ENCODE measurements at regions of chr2 and their contacts with region 1.

Region 1: GRCh38 chr2:231674587-231675338 is 33.6 kb upstream of the PTMA start:
- DNase-seq: peak; percentile 52
- H3K4me3 ChIP-seq: no peak overlapping the region
- H3K27ac ChIP-seq: no peak overlapping the region
- H3K4me1 ChIP-seq: peaks cover 9% of the 10 kb centered on the region
- H3K27me3 ChIP-seq: no peaks in the 10 kb centered on the region
- CTCF ChIP-seq: peak; percentile 76 to 89
- POLR2A ChIP-seq: no peak

Region 2: GRCh38 chr2:231583982-231584381 is 90.8 kb before region 1 on chr2:
- CTCF ChIA-PET with region 1: no interaction called
- POLR2A ChIA-PET with region 1: no interaction called
- dilution Hi-C with region 1: no loop called
- intact Hi-C with region 1: no loop called
- DNase-seq: no peak
- H3K4me3 ChIP-seq: no peak overlapping the region
- H3K27ac ChIP-seq: no peak overlapping the region
- H3K4me1 ChIP-seq: no peaks in the 10 kb centered on the region
- H3K27me3 ChIP-seq: peaks cover 2 to 3% of the 10 kb centered on the region in 2 experiments
- CTCF ChIP-seq: no peak
- POLR2A ChIP-seq: no peak

Region 3: DNA sequence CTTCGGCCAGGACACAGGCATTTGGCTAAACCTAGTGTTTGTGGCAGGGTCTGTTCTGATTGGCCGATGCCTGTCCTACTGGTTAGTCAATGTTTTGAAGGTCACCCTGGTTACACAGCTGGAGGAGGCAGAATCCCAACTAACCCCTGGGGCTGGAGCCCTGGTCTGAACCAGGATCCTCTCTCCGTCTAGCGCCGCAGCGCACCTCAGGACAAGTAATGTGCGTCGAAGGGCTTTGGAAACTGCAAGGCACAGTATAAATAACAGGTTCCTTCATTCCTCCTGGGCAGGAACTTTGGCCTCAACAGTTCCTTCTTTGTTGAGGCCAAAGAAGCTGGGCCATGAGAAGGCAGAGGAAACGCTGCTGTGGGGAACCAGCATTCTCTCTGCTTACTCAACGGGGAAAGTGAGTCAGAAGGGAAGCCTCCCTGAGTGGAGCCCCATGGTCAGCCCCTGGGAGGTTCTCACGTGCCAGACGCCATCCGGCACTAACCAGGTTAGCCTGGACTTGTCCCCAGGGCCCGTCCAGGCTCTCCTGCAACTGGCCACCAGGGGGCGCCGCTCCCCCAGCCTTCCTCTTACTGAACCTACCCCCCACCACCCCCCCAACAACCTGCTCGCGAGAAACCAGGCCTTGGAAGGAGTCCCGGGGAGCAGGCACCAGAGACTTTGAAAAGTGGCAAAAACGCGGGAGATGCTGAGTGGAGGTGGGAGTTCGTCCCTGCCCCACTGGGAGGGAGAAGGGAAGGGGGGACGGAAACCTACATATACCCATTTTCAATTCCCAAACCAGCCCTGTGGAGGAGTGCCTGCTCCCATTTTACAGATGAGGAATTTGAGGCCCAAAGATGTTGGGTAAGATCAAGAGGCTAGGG is 62.3 kb before region 1 on chr2:
- CTCF ChIA-PET with region 1: interaction called, 268 read pairs
- POLR2A ChIA-PET with region 1: interaction called, 6 read pairs
- dilution Hi-C with region 1: no loop called
- intact Hi-C with region 1: loop called (anchors 1 kb)
- DNase-seq: peak; percentile 95
- H3K4me3 ChIP-seq: no peak overlapping the region
- H3K27ac ChIP-seq: peak overlapping the region; percentile 89
- H3K4me1 ChIP-seq: peaks cover 28% of the 10 kb centered on the region
- H3K27me3 ChIP-seq: no peaks in the 10 kb centered on the region
- CTCF ChIP-seq: peak; percentile 74 to 96
- POLR2A ChIP-seq: no peak

Region 4: GRCh38 chr2:231655897-231656296 is 18.9 kb before region 1 on chr2:
- CTCF ChIA-PET with region 1: interaction called, 93 read pairs
- POLR2A ChIA-PET with region 1: no interaction called
- dilution Hi-C with region 1: no loop called
- intact Hi-C with region 1: no loop called
- DNase-seq: no peak
- H3K4me3 ChIP-seq: no peak overlapping the region
- H3K27ac ChIP-seq: no peak overlapping the region
- H3K4me1 ChIP-seq: no peaks in the 10 kb centered on the region
- H3K27me3 ChIP-seq: no peaks in the 10 kb centered on the region
- CTCF ChIP-seq: no peak
- POLR2A ChIP-seq: no peak

Region 5: DNA sequence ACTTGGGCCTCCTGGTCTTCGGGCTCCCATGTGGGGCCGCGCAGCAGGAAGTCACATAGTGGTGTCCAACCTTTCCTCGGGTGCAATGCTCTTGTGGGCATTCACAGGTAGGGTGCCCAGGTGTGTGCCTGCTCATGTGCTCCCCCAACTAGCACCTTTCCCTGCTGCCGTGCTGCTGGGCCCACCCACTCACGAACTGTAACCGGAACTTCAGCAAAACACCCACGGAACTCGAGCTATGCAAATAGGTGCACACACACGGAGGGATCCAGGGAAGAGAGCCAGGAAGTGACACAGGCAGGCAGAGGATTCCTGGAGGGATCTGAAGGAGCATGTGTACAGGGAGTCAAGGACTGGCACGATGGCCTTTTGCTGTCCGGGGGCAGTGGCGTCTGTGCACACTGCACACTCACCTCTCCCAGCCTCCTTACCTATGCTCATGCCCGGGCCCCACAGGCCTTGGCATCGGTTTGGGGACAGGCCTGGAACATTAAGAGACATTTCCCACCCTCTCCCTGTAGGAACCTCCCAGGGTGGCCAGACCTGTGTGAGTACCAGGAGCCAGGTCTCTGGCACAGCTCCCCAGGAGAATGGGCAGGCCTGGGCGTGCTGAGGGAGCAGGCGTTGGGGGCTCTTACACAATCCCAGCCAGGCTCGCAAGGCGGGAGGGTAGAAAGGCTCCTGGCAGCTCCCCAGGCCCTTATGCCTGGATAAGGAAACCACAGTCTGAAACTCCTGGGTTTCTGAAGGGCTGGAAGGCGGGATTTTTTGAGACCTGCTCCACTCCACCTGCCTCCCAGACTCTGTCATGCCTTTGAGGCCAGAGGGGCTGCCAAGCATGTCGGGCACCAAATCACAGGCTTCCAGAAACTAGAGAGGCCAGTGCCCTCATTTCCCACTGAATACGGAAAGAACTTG is 27.0 kb after region 1 on chr2:
- CTCF ChIA-PET with region 1: interaction called, 583 read pairs
- POLR2A ChIA-PET with region 1: interaction called, 3 read pairs
- dilution Hi-C with region 1: no loop called
- intact Hi-C with region 1: no loop called
- DNase-seq: no peak
- H3K4me3 ChIP-seq: no peak overlapping the region
- H3K27ac ChIP-seq: no peak overlapping the region
- H3K4me1 ChIP-seq: peaks cover 4% of the 10 kb centered on the region
- H3K27me3 ChIP-seq: no peaks in the 10 kb centered on the region
- CTCF ChIP-seq: no peak
- POLR2A ChIP-seq: no peak

Region 6: DNA sequence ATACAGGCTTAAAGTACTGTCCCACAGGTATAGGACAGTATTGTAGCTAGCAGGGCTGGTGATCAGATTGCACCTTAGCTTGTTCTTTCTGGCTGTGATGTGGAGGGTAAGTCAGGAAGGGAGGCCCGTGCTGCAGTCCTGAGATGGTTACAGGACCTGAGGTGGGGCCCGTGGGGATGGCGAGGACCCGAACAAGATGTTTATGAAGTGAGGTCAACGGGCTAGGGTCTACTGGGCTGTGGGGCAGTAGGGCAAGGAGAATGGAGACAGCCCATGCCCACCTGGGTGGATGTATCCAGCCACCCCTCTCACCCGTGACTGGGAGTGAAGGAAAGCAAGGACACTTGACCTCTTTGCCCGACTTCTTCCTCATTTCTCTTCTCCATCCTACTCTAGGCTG is 51.5 kb after region 1 on chr2:
- CTCF ChIA-PET with region 1: interaction called, 16 read pairs
- POLR2A ChIA-PET with region 1: no interaction called
- dilution Hi-C with region 1: no loop called
- intact Hi-C with region 1: no loop called
- DNase-seq: no peak
- H3K4me3 ChIP-seq: no peak overlapping the region
- H3K27ac ChIP-seq: no peak overlapping the region
- H3K4me1 ChIP-seq: no peaks in the 10 kb centered on the region
- H3K27me3 ChIP-seq: no peaks in the 10 kb centered on the region
- CTCF ChIP-seq: no peak
- POLR2A ChIP-seq: no peak

Region 7: GRCh38 chr2:231795291-231796040 is 120.7 kb after region 1 on chr2:
- CTCF ChIA-PET with region 1: interaction called, 11 read pairs
- POLR2A ChIA-PET with region 1: no interaction called
- dilution Hi-C with region 1: no loop called
- intact Hi-C with region 1: no loop called
- DNase-seq: peak; percentile 89
- H3K4me3 ChIP-seq: no peak overlapping the region
- H3K27ac ChIP-seq: no peak overlapping the region
- H3K4me1 ChIP-seq: no peaks in the 10 kb centered on the region
- H3K27me3 ChIP-seq: no peaks in the 10 kb centered on the region
- CTCF ChIP-seq: peak; percentile 41 to 53
- POLR2A ChIP-seq: no peak

Measured in endothelial cell of umbilical vein (primary cell).